ENCODE measurements at regions of chr5 and their contacts with region 1.

Region 1: GRCh38 chr5:40736103-40736875 is 19.5 kb downstream of the TTC33 start:
- DNase-seq: no peak
- H3K4me3 Mint-ChIP-seq: no peak overlapping the region
- H3K27ac Mint-ChIP-seq: no peak overlapping the region
- H3K4me1 Mint-ChIP-seq: peaks cover 22% of the 10 kb centered on the region
- H3K27me3 Mint-ChIP-seq: no peaks in the 10 kb centered on the region

Region 2: GRCh38 chr5:39578887-39579497 is 1157.3 kb before region 1 on chr5:
- intact Hi-C with region 1: loop called (anchors 1 kb)
- DNase-seq: no peak
- H3K4me3 Mint-ChIP-seq: no peak overlapping the region
- H3K27ac Mint-ChIP-seq: no peak overlapping the region
- H3K4me1 Mint-ChIP-seq: peaks cover 8% of the 10 kb centered on the region
- H3K27me3 Mint-ChIP-seq: peaks cover 17% of the 10 kb centered on the region

Region 3: GRCh38 chr5:39714036-39714698 is 1022.1 kb before region 1 on chr5:
- intact Hi-C with region 1: loop called (anchors 1 kb)
- DNase-seq: no peak
- H3K4me3 Mint-ChIP-seq: no peak overlapping the region
- H3K27ac Mint-ChIP-seq: no peak overlapping the region
- H3K4me1 Mint-ChIP-seq: no peaks in the 10 kb centered on the region
- H3K27me3 Mint-ChIP-seq: peaks cover 5% of the 10 kb centered on the region

Region 4: DNA sequence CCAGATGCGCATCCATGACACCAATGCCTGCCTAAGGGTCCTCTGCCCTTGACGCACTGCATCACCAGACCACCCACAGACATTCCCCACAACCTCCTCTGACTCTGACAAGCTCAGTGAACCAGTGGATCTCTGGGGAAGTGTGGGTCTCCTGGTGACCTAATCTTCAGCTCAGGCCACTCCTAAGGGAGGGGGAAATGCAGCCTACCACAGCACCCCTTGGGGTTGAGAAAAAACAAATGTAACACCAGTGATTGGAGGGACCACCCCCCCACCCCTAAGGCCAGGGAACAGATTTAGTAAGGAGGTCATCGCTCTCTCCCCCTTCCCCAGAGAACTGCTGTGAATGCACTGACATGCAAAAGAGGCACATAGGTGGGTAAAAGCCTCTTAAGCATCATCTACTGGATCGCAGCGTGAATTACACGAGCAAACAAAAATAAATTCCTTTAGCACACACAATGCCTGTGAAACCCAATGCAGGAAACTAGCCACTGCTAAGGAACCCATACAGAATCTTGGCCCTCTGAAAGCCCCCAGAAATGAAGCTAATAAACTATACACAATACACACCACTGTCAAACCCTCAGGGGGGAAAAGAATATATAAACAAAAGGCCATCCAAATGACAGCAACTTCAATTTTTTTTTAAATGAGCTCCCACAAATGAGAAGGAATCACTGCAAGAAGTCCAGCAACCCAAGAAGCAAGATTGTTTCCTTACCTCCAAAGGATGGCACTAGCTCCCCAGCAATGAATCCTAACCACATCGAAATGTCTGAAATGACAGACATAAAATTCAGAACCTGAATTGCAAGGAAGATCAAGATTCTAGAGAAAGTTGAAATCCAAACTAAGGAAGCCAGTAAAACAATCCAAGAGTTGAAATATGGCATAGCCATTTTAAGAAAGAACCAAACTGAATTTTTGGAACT is 570.2 kb before region 1 on chr5:
- intact Hi-C with region 1: loop called (anchors 1 kb)
- DNase-seq: no peak
- H3K4me3 Mint-ChIP-seq: no peak overlapping the region
- H3K27ac Mint-ChIP-seq: no peak overlapping the region
- H3K4me1 Mint-ChIP-seq: peaks cover 17% of the 10 kb centered on the region
- H3K27me3 Mint-ChIP-seq: no peaks in the 10 kb centered on the region

Region 5: DNA sequence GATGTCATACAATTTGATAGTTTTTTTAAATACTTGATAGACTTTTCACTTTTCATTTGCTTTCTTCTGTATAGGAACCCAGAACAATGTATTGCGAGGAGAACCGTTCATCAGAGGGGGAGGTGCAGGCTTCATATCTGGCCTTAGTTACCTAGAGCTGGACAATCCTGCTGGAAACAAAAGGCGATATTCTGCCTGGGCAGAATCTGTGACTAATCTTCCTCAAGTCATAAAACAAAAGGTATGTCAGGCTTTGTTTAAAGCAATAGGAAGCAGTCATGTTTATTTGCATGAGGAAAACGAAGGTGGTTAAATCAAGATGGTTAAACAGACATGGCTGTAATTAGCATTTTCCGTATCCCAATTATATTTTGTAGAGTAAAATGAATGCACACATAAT is 219.0 kb after region 1 on chr5:
- intact Hi-C with region 1: no loop called
- DNase-seq: no peak
- H3K4me3 Mint-ChIP-seq: no peak overlapping the region
- H3K27ac Mint-ChIP-seq: no peak overlapping the region
- H3K4me1 Mint-ChIP-seq: no peaks in the 10 kb centered on the region
- H3K27me3 Mint-ChIP-seq: no peaks in the 10 kb centered on the region

Measured in activated T-helper 1 cell treated with anti-CD3 and anti-CD28 coated beads, Interleukin-12 subunit alpha, Interleukin-12 subunit beta, Interleukin-2, Interleukin-4 antibody, amounts not matched to agents 30 ng/mL and 10 ng/mL and 1 ng/mL, durations not matched to agents 14 hours and 24 hours and 36 hours (primary cell).